ENCODE measurements at regions of chr6 and their contacts with region 1.

Region 1: DNA sequence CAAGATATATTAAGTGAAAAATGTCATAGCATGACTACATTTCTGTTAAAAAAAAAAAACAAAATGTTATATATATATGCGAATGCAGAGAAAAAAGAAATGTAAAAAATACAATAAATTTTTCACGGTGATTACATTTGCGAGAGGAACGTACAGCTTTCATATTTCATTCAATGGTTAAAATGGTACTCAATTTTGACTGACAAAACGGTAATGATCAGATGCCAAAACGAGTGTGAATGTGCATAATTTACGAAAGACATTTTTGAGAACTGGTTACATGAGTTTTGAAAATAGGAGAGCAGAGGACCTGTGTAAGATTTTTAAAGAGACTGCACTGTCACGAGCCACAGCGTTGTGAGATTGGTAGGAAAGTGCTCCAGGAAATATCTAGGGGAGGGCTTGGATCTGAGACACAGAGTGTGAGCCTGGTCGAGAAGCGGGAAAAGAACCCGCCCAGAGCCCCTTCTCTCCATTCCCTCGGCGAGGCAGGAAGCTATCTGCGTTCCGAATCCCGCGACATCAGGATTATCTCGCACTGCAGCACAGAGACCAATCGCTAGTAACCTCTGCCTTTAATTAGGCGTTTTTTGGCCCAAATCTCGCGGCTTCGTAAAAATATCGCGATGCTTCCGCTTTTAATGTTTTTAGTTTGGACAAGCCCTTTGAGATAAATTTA is 28.5 kb downstream of the TRIM27 start:
- DNase-seq: peak; percentile 97
- H3K4me3 Mint-ChIP-seq: peak overlapping the region; percentile 99
- H3K27ac Mint-ChIP-seq: peak overlapping the region; percentile 100
- H3K4me1 Mint-ChIP-seq: peaks cover 14% of the 10 kb centered on the region
- H3K27me3 Mint-ChIP-seq: peaks cover 7% of the 10 kb centered on the region

Region 2: DNA sequence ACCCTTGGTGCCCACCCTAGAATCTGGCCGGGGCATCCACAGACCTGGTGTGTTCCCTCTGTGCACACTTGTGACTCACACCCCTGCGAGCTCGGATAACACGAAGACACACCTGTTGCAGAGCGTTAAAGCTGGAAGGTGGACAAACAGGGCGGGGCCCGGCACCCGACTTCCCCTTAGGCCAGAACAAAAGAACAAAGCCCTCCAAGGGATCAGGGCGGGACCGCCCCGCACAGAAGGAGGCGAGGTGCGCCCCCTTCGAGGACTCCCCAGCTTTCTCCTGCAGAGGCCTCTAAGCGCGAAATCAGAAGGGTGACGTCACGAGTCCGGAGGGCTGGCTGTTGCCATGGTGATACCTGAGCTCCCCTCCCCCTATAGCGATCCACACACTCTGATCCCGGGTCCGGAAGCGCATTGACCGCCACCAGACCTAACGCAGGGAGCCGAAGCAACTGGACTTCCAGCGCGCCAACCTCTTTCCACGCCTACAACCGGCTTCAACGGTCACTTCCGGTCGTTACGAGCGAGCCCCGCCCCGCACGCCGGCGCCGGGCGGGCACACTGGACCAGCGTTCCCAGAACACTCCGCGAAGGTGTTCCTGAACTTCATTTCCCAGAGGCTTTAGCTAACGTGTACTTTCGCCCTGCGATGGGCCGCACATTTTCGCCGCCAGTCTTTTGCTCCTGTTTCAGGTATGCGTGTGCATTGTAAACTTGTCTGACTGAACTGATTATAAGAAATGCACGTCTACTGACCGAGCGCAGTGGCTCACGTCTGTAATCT is 1422.5 kb before region 1 on chr6 and contains the start of gene ZNF184:
- intact Hi-C with region 1: loop called (anchors 10 kb)
- DNase-seq: peak; percentile 97
- H3K4me3 Mint-ChIP-seq: peak within 1 kb of the TSS; percentile 89
- H3K27ac Mint-ChIP-seq: peak within 1 kb of the TSS; percentile 98
- H3K4me1 Mint-ChIP-seq: peaks cover 41% of the 10 kb centered on the region
- H3K27me3 Mint-ChIP-seq: peaks cover 2% of the 10 kb centered on the region
- total RNA-seq, gene ZNF184: 7.9 and 8.2 TPM in 2 replicates

Region 3: GRCh38 chr6:28838634-28839442 is 56.4 kb before region 1 on chr6:
- intact Hi-C with region 1: loop called (anchors 1 kb)
- DNase-seq: peak; percentile 94
- H3K4me3 Mint-ChIP-seq: peak overlapping the region; percentile 98
- H3K27ac Mint-ChIP-seq: peak overlapping the region; percentile 81
- H3K4me1 Mint-ChIP-seq: peaks cover 16% of the 10 kb centered on the region
- H3K27me3 Mint-ChIP-seq: peaks cover 44% of the 10 kb centered on the region

Region 4: DNA sequence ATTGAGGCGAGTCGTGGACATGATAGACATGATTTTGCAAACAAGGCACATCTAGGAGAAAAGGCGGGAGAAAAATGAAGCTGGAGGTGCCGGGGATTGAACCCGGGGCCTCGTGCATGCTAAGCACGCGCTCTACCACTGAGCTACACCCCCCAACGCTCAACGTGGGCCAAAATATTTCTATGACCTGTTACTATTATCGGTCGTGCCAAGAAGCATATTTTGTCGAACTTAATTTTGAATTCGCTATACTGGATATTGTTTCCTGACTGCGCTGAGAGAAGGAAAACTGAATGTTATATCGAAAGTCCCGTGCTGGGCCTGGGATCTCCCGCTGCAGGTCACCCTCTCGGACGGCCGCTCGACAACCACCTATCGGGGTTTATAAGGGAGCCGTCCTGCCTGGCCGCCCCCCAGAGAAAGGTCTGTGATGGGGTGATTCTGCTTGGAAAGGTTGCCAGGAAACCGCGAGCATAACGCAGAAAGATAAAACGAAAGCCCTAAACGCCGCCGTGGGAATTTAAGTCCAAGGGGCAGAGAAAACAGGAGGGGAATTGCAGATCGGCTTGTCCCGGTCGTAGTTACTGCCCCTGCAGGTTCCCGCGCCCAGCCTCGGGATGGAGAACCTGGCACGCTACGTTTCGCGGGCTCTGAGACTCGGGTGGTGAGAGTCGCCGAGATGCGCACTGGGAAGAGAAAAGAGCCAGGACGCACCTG is 31.5 kb before region 1 on chr6:
- intact Hi-C with region 1: loop called (anchors 1 kb)
- DNase-seq: peak; percentile 96
- H3K4me3 Mint-ChIP-seq: peak overlapping the region; percentile 95
- H3K27ac Mint-ChIP-seq: peak overlapping the region; percentile 83
- H3K4me1 Mint-ChIP-seq: peaks cover 33% of the 10 kb centered on the region
- H3K27me3 Mint-ChIP-seq: peaks cover 18% of the 10 kb centered on the region

Region 5: GRCh38 chr6:28880894-28881780 is 14.1 kb before region 1 on chr6:
- intact Hi-C with region 1: loop called (anchors 1 kb)
- DNase-seq: peak; percentile 85
- H3K4me3 Mint-ChIP-seq: peak overlapping the region; percentile 61
- H3K27ac Mint-ChIP-seq: peak overlapping the region; percentile 34
- H3K4me1 Mint-ChIP-seq: peaks cover 26% of the 10 kb centered on the region
- H3K27me3 Mint-ChIP-seq: peaks cover 29% of the 10 kb centered on the region

Region 6: GRCh38 chr6:28923318-28924102 is 28.2 kb after region 1 on chr6 and contains the start of gene TRIM27:
- intact Hi-C with region 1: loop called (anchors 1 kb)
- DNase-seq: peak; percentile 96
- H3K4me3 Mint-ChIP-seq: peak within 1 kb of the TSS; percentile 85
- H3K27ac Mint-ChIP-seq: peak within 1 kb of the TSS; percentile 93
- H3K4me1 Mint-ChIP-seq: peaks cover 27% of the 10 kb centered on the region
- H3K27me3 Mint-ChIP-seq: no peaks in the 10 kb centered on the region
- total RNA-seq, gene TRIM27: 64.8 and 67.3 TPM in 2 replicates

Region 7: GRCh38 chr6:28981833-28982475 is 86.7 kb after region 1 on chr6:
- intact Hi-C with region 1: loop called (anchors 2 kb)
- DNase-seq: peak; percentile 91
- H3K4me3 Mint-ChIP-seq: peak overlapping the region; percentile 92
- H3K27ac Mint-ChIP-seq: peak overlapping the region; percentile 95
- H3K4me1 Mint-ChIP-seq: peaks cover 56% of the 10 kb centered on the region
- H3K27me3 Mint-ChIP-seq: peaks cover 38% of the 10 kb centered on the region

Measured in activated CD4-positive, alpha-beta T cell treated with anti-CD3 and anti-CD28 coated beads, Interleukin-2, amount 10 ng/mL, durations not matched to agents 24 days and 14 days (primary cell).